ENCODE measurements at regions of chr10 and their contacts with region 1.

Region 1: DNA sequence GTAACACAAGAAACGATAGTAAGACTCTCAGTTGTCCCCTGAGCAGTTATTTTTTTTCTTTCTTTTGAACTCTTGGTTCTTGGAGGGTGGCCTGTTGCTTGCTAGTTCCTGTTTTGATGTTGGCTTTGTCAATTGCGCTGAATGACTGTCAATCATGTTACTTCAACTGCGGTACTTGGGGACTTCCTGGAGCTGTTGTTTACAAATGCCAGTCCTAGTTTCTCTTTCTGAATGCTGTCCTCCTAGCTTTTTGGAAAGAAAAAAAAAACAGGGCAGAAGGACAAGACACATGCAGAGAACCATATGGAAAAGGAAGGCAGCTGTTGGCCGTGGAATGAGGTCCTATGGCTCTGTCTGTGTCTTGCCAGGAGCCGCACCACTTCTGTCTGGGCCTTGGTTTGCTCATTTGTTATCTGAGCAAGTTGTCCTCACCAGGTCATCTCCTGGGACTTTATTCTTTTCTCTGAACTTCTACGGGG is 7.0 kb upstream of the PDCD4 start:
- DNase-seq: no peak
- H3K4me3 Mint-ChIP-seq: peak overlapping the region; percentile 58
- H3K27ac Mint-ChIP-seq: peak overlapping the region; percentile 98
- H3K4me1 Mint-ChIP-seq: peaks cover 60% of the 10 kb centered on the region
- H3K27me3 Mint-ChIP-seq: no peaks in the 10 kb centered on the region
- CTCF ChIP-seq: no peak

Region 2: GRCh38 chr10:109875151-109875568 is 989.5 kb before region 1 on chr10:
- CTCF ChIA-PET with region 1: no interaction called
- POLR2A ChIA-PET with region 1: no interaction called
- intact Hi-C with region 1: no loop called
- DNase-seq: no peak
- H3K4me3 Mint-ChIP-seq: no peak overlapping the region
- H3K27ac Mint-ChIP-seq: no peak overlapping the region
- H3K4me1 Mint-ChIP-seq: no peaks in the 10 kb centered on the region
- H3K27me3 Mint-ChIP-seq: no peaks in the 10 kb centered on the region
- CTCF ChIP-seq: no peak

Region 3: GRCh38 chr10:110774069-110775019 is 90.4 kb before region 1 on chr10:
- CTCF ChIA-PET with region 1: no interaction called
- POLR2A ChIA-PET with region 1: interaction called, 14 read pairs
- intact Hi-C with region 1: no loop called
- DNase-seq: peak; percentile 89
- H3K4me3 Mint-ChIP-seq: no peak overlapping the region
- H3K27ac Mint-ChIP-seq: peak overlapping the region; percentile 94
- H3K4me1 Mint-ChIP-seq: peaks cover 28% of the 10 kb centered on the region
- H3K27me3 Mint-ChIP-seq: no peaks in the 10 kb centered on the region
- CTCF ChIP-seq: no peak

Region 4: GRCh38 chr10:110852255-110852896 is 12.3 kb before region 1 on chr10:
- CTCF ChIA-PET with region 1: no interaction called
- POLR2A ChIA-PET with region 1: interaction called, 42 read pairs
- intact Hi-C with region 1: no loop called
- DNase-seq: peak; percentile 86
- H3K4me3 Mint-ChIP-seq: no peak overlapping the region
- H3K27ac Mint-ChIP-seq: peak overlapping the region; percentile 36
- H3K4me1 Mint-ChIP-seq: peaks cover 36% of the 10 kb centered on the region
- H3K27me3 Mint-ChIP-seq: no peaks in the 10 kb centered on the region
- CTCF ChIP-seq: no peak

Region 5: DNA sequence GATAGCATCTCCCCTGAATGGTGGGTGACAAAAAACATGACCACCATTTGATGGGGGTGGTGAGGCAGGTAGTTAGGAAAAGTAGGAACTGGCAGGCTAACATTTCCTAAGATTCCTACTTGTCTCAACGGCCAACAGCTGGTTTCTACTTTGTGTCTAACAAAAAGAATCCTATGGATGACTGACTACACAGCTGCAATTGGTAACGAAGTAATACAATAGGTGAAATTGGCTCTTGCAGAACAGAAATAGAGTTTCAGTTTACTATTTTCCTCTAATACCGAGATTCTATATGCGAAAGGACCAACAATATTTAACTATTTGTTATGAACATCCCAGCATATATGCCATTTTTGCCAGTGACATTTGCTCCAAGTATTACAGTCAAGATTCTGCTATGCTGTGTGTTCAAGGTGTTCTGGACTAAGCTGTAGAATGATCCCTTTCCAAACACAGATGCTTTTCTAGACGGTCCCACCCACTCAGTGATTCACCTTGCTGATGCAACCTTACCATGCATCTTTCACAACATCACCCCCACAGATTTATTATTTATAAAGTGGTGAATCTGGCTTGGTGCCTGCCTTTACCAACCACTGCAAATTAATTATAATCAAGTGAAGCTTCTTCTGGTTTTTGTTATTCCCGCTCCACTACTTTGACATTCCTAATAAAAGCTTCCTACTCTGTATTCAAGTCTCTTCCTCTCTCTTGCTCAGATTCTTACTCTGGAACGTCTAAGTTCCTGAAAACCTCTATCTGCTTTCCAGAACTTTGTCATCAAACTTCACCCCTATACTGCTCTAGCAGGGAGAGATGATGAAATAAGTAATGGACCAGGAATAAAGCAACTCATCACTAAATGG is 37.5 kb after region 1 on chr10:
- CTCF ChIA-PET with region 1: interaction called, 5 read pairs
- POLR2A ChIA-PET with region 1: interaction called, 12 read pairs
- intact Hi-C with region 1: no loop called
- DNase-seq: peak; percentile 93
- H3K4me3 Mint-ChIP-seq: peak overlapping the region; percentile 2
- H3K27ac Mint-ChIP-seq: peak overlapping the region; percentile 4
- H3K4me1 Mint-ChIP-seq: peaks cover 20% of the 10 kb centered on the region
- H3K27me3 Mint-ChIP-seq: no peaks in the 10 kb centered on the region
- CTCF ChIP-seq: no peak

Region 6: GRCh38 chr10:110918643-110919363 is 54.1 kb after region 1 on chr10 and contains the start of gene BBIP1:
- CTCF ChIA-PET with region 1: no interaction called
- POLR2A ChIA-PET with region 1: interaction called, 23 read pairs
- intact Hi-C with region 1: no loop called
- DNase-seq: peak; percentile 100
- H3K4me3 Mint-ChIP-seq: peak within 1 kb of the TSS; percentile 89
- H3K27ac Mint-ChIP-seq: peak within 1 kb of the TSS; percentile 100
- H3K4me1 Mint-ChIP-seq: peaks cover 22% of the 10 kb centered on the region
- H3K27me3 Mint-ChIP-seq: no peaks in the 10 kb centered on the region
- CTCF ChIP-seq: no peak
- total RNA-seq, gene BBIP1: 46.9 and 68.7 TPM in 2 replicates